A549 (cell line): ENCODE measurements at regions of chr19 and their contacts with region 1.

Region 1: DNA sequence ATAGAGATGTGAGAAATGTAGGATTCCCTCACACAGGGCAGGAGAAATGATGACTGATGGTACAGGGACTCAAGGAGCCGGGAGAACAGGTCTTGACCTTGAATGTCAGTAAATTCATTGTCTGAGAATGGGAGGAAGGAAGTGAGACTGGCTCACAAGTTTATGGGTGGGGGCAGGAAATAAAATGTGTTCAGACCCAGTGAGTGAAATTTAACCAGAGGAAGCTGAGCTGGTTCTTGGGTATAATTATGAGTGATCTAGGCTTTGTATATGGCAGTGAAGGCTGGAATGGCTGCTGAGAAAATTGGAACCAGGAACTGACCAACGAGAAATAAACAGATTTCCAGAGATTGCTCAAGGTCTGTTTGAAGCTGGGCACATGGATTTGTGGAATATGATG is 6.3 kb upstream of the IGSF23 start:
- DNase-seq: peak in 1 of 2 experiments; percentile 67
- ATAC-seq: peak in 1 of 2 experiments; percentile 53; a peak in 4 of 6 replicates
- H3K4me3 ChIP-seq: no peak overlapping the region
- H3K27ac ChIP-seq: peak overlapping the region; percentile 46; a peak in 5 of 6 replicates
- H3K4me1 ChIP-seq: peaks cover 46% of the 10 kb centered on the region
- CTCF ChIP-seq: no peak
- EP300 ChIP-seq: no peak
- POLR2A ChIP-seq: no peak
- RAD21 ChIP-seq: no peak

Region 2: DNA sequence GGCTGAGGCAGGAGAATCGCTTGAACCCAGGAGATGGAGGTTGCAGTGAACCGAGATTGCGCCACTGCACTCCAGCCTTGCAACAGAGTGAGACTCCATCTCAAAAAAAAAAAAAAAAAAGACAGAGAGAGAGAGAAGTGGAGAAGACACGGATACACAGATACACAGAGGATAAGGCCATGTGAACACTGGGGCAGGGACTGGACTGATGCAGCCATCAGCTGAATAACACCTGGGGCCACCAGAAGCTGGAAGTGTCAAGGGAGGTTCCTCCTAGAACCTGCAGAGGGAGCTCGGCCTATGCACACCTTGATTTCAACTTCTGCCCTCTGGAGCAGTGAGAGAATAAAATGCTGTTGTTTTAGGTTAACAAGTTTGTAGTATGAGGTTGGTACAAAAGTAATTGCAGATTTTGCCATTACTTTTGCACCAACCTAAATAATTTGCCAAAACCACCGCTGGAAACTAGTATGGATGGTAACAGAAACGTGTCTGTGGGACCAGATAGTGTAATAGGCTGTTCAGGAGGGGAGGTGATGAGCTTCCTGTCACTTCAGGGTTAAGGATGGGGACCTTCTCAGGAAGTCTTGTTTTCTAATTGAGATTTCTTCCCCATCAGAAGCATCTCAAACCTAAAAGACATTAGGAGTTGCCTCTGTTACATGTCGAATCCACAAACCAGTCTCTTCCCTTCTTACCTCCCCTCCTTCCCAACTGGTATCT is 30.0 kb before region 1 on chr19:
- CTCF ChIA-PET with region 1: interaction called, 15 read pairs
- POLR2A ChIA-PET with region 1: no interaction called
- DNase-seq: peak; percentile 65 to 81
- ATAC-seq: peak; percentile 91 to 94
- H3K4me3 ChIP-seq: no peak overlapping the region
- H3K27ac ChIP-seq: peak overlapping the region in 1 of 2 experiments; percentile 5; a peak in 1 of 6 replicates
- H3K4me1 ChIP-seq: no peaks in the 10 kb centered on the region
- CTCF ChIP-seq: peak; percentile 86
- EP300 ChIP-seq: no peak
- POLR2A ChIP-seq: no peak
- RAD21 ChIP-seq: peak; percentile 84 to 96

Region 3: DNA sequence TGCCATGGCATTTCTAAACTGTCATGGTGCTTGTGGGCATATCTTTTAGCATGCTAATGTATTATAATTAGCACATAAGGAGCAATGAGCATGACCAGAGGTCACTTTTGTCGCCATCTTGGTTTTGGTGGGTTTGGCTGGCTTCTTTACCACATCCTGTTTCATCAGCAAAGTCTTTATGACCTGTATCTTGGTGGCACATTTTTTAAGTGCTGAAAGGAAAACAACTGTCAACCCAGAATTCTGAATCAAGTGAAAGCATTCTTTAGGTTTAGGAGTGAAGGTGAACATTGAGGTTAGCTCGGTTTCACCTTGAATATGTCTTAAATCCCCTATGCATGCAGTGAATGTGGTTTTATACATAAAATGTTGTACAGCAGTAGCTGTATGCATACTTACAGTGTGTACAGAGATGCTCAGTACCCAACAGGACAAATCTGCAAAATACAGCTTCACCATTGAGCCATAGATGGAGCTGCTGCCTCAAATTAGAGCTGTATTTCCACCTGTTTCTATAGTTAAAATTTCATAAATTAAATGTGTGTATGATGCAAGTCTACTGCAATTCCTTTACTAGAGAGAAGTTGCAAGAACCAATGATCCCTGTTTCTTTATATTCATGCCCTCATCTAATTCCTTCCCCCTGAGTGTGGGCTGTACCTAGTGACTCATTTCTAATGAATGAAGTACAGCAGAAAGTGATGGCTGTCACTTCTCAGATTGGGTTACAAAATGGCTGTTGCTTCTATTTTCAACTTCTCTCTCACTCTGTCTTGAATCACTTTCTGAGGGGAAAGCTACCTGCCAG is 18.9 kb before region 1 on chr19:
- CTCF ChIA-PET with region 1: interaction called, 58 read pairs
- POLR2A ChIA-PET with region 1: interaction called, 3 read pairs
- DNase-seq: peak; percentile 84 to 85
- ATAC-seq: peak; percentile 85 to 96
- H3K4me3 ChIP-seq: peak overlapping the region; percentile 13; the same call in 1 of the 3 replicates
- H3K27ac ChIP-seq: peak overlapping the region; percentile 90 to 94
- H3K4me1 ChIP-seq: peaks cover 75% of the 10 kb centered on the region
- CTCF ChIP-seq: peak; percentile 83
- EP300 ChIP-seq: peak; percentile 71 to 81; a peak in 3 of 5 replicates
- POLR2A ChIP-seq: no peak
- RAD21 ChIP-seq: peak; percentile 71 to 93

Region 4: GRCh38 chr19:44596428-44597130 is 10.5 kb before region 1 on chr19:
- CTCF ChIA-PET with region 1: interaction called, 58 read pairs
- POLR2A ChIA-PET with region 1: no interaction called
- DNase-seq: peak; percentile 68 to 72
- ATAC-seq: peak; percentile 72 to 83
- H3K4me3 ChIP-seq: no peak overlapping the region
- H3K27ac ChIP-seq: peak overlapping the region; percentile 67 to 79
- H3K4me1 ChIP-seq: peaks cover 46% of the 10 kb centered on the region
- CTCF ChIP-seq: no peak
- EP300 ChIP-seq: no peak
- POLR2A ChIP-seq: no peak
- RAD21 ChIP-seq: 0 out of 5 replicates have a peak, but pooled peaks of 1 of the 2 experiments have one; percentile 12

Region 5: DNA sequence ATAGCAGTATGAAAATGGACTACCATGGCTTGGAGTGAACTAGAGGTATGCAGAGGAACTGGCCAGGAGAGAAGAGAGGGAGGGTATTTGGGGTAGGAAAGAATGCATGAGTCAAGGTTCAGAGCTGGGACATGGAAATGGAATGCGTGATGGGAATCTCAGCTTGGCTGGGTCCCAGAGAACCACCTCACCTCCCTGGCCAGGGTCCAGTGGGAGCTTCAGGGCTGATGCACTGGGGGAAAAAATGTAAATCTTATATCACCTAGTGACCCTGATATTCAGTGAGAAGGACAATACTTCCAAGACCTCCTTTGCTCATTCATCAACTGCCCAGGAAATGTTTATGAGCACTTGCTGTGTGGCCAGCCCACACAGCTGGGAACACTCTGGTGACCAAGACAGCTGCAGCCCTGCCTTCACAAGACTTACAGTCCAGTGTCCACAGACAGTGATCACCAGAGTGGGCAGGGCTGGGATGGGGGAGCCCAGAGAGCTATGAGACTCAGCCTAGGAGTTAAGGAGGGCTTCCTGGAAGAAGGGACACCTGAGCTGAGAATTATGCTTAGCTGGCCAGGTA is 19.1 kb after region 1 on chr19:
- CTCF ChIA-PET with region 1: interaction called, 103 read pairs
- POLR2A ChIA-PET with region 1: no interaction called
- DNase-seq: peak; percentile 79 to 93
- ATAC-seq: peak; percentile 90 to 91
- H3K4me3 ChIP-seq: no peak overlapping the region
- H3K27ac ChIP-seq: peak overlapping the region; percentile 81 to 89
- H3K4me1 ChIP-seq: peaks cover 43% of the 10 kb centered on the region
- CTCF ChIP-seq: no peak
- EP300 ChIP-seq: peak; percentile 65 to 74; a peak in 2 of 5 replicates
- POLR2A ChIP-seq: no peak
- RAD21 ChIP-seq: peak; percentile 25 to 34; a peak in 4 of 5 replicates

Region 6: GRCh38 chr19:44643605-44644401 is 36.8 kb after region 1 on chr19 and contains the start of gene PVR:
- CTCF ChIA-PET with region 1: interaction called, 14 read pairs
- POLR2A ChIA-PET with region 1: interaction called, 9 read pairs
- DNase-seq: peak; percentile 91 to 98
- ATAC-seq: peak; percentile 86 to 90
- H3K4me3 ChIP-seq: peak within 1 kb of the TSS; percentile 61
- H3K27ac ChIP-seq: peak within 1 kb of the TSS; percentile 91 to 97
- H3K4me1 ChIP-seq: peaks cover 75% of the 10 kb centered on the region
- CTCF ChIP-seq: no peak
- EP300 ChIP-seq: peak in 1 of 2 experiments; percentile 51; a peak in 1 of 5 replicates
- POLR2A ChIP-seq: peak; percentile 72
- RAD21 ChIP-seq: no peak; a peak in 1 of 5 replicates
- polyA plus RNA-seq, gene PVR: 108 and 110 TPM in 2 replicates

Region 7: GRCh38 chr19:44662691-44663385 is 55.8 kb after region 1 on chr19:
- CTCF ChIA-PET with region 1: interaction called, 115 read pairs
- POLR2A ChIA-PET with region 1: no interaction called
- DNase-seq: no peak
- ATAC-seq: no peak
- H3K4me3 ChIP-seq: no peak overlapping the region
- H3K27ac ChIP-seq: peak overlapping the region in 1 of 2 experiments; percentile 40; a peak in 2 of 6 replicates
- H3K4me1 ChIP-seq: peaks cover 18% of the 10 kb centered on the region; the same call in 1 of the 3 replicates
- CTCF ChIP-seq: no peak
- EP300 ChIP-seq: no peak
- POLR2A ChIP-seq: no peak
- RAD21 ChIP-seq: no peak